Astrocyte of the cerebellum (primary cell): ENCODE measurements at regions of chr9 and their contacts with region 1.

Region 1: GRCh38 chr9:107597743-107598217 is 108.2 kb upstream of the KLF4 start:
- DNase-seq: no peak
- H3K4me3 ChIP-seq: no peak overlapping the region
- CTCF ChIP-seq: no peak

Region 2: DNA sequence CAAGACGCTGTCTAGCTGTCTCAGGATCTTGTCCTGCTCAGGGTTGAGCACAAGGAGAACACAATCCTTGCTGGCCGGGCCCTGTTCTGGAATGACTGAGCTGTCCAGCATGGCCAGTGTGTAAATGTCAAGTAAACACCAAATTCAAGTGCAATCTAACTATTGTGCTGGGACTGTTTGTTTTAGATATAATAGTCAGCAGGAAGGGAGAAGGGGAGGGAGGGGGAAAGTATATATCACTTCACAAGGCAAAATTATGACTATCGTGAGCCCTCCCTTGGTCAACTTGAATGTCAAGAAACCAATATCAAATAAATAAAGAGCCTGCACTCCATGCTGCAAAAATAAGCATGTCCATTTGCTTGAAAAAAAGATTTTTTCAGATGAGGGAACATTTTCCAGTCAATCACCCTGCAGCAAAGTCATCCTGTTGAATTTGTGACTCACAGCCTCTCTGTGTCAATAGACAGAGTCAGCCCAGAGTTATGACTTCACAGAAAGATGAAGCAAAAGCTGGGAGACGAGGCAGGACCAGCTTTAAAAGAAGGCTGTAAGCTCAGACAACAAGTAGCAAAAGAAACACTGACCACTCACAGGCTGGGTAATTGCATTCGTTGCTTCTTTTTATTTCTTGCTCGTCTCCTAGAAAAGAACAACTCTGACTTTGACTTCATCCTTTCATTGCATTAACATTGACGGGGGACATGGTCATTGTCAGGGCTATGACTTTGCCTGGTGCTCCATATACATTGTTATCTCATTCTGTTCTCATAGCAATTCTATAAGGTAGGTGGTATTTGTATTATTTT is 93.0 kb before region 1 on chr9:
- in situ Hi-C with region 1: no loop called
- DNase-seq: peak; percentile 20
- H3K4me3 ChIP-seq: no peak overlapping the region
- CTCF ChIP-seq: no peak

Region 3: DNA sequence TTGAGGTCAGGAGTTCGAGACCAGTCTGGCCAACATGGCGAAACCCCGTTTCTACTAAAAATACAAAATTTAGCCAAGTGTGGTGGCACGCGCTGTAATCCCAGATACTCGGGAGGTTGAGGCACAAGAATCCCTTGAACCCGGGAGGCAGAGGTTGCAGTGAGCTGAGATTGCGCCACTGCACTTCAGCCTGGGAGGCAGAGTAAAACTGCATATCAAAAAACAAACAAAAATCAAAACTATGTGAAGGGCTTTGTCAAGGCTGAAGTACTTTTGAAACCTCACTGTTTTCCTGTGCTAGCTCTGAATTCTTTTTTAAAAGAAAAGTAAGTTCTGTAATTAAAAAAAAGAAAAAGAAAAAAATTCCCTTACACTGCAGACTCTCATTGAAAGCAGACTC is 43.1 kb before region 1 on chr9:
- in situ Hi-C with region 1: loop called (anchors 5 kb)
- DNase-seq: no peak
- H3K4me3 ChIP-seq: no peak overlapping the region
- CTCF ChIP-seq: no peak

Region 4: GRCh38 chr9:107684224-107684623 is 86.4 kb after region 1 on chr9:
- in situ Hi-C with region 1: no loop called
- DNase-seq: no peak
- H3K4me3 ChIP-seq: no peak overlapping the region
- CTCF ChIP-seq: no peak